ENCODE measurements at regions of chr9 and their contacts with region 1.

Region 1: DNA sequence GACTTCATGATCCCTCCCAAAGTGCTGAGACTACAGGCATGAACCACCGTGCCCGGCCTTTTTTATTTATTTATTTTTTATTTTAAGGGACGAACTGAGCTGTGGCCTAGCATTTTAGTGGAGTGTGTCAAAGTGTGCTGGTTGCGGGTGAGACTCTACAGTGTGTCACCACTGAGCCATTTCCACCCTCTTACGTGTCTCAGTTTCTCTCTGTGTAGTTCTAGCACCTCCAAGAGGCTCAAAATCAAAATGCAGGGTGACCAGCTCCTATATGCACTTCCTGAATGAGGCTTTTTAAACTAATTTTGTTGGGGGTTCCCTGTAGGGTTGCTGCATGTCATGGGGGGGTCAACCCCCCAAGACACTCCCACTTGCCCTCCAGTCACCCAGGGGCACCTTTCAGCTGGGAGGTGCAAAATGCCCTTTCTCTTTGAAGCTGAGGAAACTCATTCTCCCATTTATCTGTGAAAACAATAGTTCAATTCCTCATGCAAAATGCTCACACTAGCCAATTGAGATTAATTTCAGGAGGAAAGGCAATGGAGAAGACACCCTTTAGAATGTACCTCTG is 69.3 kb downstream of the COL15A1 start:
- DNase-seq: peak; percentile 36
- ATAC-seq: peak; percentile 79
- H3K4me3 Mint-ChIP-seq: no peak overlapping the region
- H3K27ac Mint-ChIP-seq: peak overlapping the region; percentile 93
- H3K4me1 Mint-ChIP-seq: peaks cover 22% of the 10 kb centered on the region
- H3K27me3 Mint-ChIP-seq: no peaks in the 10 kb centered on the region
- CTCF ChIP-seq: peak; percentile 45

Region 2: GRCh38 chr9:98974994-98975712 is 37.9 kb before region 1 on chr9:
- CTCF ChIA-PET with region 1: interaction called, 12 read pairs
- POLR2A ChIA-PET with region 1: no interaction called
- intact Hi-C with region 1: no loop called
- DNase-seq: peak; percentile 86
- ATAC-seq: peak; percentile 99
- H3K4me3 Mint-ChIP-seq: no peak overlapping the region
- H3K27ac Mint-ChIP-seq: no peak overlapping the region
- H3K4me1 Mint-ChIP-seq: peaks cover 9% of the 10 kb centered on the region
- H3K27me3 Mint-ChIP-seq: no peaks in the 10 kb centered on the region
- CTCF ChIP-seq: peak; percentile 93

Region 3: DNA sequence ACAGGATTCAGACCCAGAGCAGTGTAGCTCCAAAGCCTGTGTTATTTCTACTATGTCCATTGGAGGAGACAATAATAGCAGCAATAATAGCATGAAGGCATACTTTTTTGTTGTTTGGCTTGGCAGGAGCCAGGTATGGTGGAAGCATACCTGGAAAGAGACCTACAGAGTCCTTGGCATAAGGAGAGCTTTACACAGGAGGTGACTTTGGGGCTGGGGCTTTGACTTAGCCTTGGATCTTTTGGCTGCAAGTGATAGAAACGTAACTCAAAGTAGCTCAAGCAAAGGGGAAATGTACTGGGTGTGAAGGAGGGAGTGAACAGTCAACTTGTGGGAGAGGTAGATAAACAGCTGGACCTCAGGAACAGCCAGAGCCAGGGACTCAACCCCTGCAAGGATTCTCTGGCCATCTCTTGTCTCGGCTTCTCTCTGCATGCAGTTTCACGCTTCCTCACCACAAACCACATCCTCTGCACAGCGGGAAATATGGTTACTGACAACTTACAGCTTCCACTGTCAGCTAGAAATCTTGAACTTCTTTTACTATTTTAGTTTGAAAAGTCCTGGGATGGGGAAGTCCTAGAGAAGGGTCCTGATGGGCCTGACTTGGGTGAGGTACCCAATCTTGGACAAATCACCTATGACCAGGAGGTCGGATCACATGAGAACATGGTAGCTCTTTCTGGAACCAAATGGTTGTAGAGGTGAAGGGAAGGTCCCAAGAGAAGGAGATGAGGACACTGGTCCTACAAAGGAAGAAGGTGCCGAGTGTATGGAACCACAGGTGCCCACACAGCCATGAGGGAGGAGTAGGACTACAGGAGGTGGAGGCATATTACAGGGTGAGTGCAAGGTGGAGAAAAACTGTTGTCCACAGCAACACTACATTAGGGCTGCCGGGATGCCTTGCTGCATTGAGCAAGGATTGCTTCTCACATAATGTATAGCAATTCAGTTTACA is 44.9 kb after region 1 on chr9:
- CTCF ChIA-PET with region 1: interaction called, 15 read pairs
- POLR2A ChIA-PET with region 1: interaction called, 3 read pairs
- intact Hi-C with region 1: no loop called
- DNase-seq: peak; percentile 94
- ATAC-seq: peak; percentile 43
- H3K4me3 Mint-ChIP-seq: peak overlapping the region; percentile 63
- H3K27ac Mint-ChIP-seq: peak overlapping the region; percentile 86
- H3K4me1 Mint-ChIP-seq: peaks cover 63% of the 10 kb centered on the region
- H3K27me3 Mint-ChIP-seq: peaks cover 4% of the 10 kb centered on the region
- CTCF ChIP-seq: no peak

Region 4: DNA sequence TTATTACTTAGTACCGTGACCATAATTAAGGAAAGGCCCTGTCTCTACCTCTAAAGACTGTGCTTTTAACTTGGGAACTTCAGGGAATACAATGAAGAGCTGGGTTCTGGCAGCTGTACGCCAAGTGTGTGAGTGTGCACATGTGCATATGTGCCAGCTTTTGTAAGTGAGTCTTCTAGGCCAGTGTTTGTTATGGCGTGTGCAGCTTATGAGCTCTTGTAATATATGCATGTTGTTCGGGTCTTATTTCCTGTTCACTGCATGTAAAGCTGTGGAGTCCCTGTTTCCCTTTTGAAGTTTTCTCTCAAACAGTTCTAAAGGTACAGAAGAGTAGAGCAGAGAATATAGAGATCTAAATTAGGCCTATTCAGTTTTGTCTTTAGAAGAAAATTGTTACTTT is 122.4 kb after region 1 on chr9:
- CTCF ChIA-PET with region 1: interaction called, 46 read pairs
- POLR2A ChIA-PET with region 1: interaction called, 3 read pairs
- intact Hi-C with region 1: no loop called
- DNase-seq: no peak
- ATAC-seq: peak; percentile 63
- H3K4me3 Mint-ChIP-seq: peak overlapping the region; percentile 46
- H3K27ac Mint-ChIP-seq: peak overlapping the region; percentile 71
- H3K4me1 Mint-ChIP-seq: peaks cover 65% of the 10 kb centered on the region
- H3K27me3 Mint-ChIP-seq: no peaks in the 10 kb centered on the region
- CTCF ChIP-seq: no peak

Region 5: GRCh38 chr9:99353408-99353807 is 340.4 kb after region 1 on chr9:
- CTCF ChIA-PET with region 1: no interaction called
- POLR2A ChIA-PET with region 1: no interaction called
- intact Hi-C with region 1: no loop called
- DNase-seq: no peak
- ATAC-seq: no peak
- H3K4me3 Mint-ChIP-seq: no peak overlapping the region
- H3K27ac Mint-ChIP-seq: no peak overlapping the region
- H3K4me1 Mint-ChIP-seq: no peaks in the 10 kb centered on the region
- H3K27me3 Mint-ChIP-seq: peaks cover 5% of the 10 kb centered on the region
- CTCF ChIP-seq: no peak